MCF 10A (cell line): ENCODE measurements at regions of chr1 and their contacts with region 1.

Region 1: DNA sequence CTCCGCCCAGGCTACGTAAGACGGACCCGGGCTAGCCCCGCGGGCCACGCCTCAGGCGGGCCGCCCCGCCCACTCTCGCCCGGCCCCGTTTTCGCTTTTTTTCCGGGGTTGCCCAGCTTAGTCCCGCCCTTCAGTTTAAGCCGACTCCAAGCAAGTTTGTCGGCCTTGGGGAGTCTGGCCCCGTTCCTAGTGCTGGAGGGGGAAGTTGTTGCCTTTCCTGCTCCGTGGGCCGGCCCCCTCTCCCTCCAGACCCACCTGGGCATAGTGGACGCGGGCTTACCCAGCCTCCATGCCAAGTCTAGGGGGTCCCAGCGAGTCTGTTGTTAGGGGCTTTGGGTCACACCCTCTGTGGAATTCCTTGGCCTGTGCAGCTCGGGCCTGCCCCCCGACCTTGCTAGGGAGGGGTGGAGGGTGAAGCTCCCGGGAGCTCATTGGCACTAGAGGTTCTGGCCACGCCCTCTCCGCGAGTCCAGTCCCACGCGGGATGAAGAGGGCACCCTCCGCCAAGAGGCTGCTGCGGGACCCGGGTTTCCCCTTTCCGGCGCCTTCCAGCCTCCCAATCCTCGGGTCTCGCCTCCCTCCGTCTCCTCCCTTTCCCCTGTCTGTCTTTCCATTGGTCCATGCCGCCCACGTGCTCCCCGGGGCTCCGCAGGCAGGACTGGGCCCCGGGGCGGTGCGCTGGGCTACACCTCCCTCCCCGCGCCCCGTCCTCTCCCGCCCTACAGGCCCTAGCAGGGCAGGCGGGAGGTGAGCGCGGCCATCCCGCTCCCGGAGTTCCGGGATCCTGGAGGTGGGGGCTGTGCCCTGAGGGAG is 3.3 kb downstream of the RUSC1 start:
- DNase-seq: peak; percentile 99
- H3K4me3 Mint-ChIP-seq: peak overlapping the region; percentile 90
- H3K27ac Mint-ChIP-seq: peak overlapping the region; percentile 55
- H3K4me1 Mint-ChIP-seq: peaks cover 30% of the 10 kb centered on the region
- H3K27me3 Mint-ChIP-seq: no peaks in the 10 kb centered on the region
- CTCF ChIP-seq: no peak

Region 2: DNA sequence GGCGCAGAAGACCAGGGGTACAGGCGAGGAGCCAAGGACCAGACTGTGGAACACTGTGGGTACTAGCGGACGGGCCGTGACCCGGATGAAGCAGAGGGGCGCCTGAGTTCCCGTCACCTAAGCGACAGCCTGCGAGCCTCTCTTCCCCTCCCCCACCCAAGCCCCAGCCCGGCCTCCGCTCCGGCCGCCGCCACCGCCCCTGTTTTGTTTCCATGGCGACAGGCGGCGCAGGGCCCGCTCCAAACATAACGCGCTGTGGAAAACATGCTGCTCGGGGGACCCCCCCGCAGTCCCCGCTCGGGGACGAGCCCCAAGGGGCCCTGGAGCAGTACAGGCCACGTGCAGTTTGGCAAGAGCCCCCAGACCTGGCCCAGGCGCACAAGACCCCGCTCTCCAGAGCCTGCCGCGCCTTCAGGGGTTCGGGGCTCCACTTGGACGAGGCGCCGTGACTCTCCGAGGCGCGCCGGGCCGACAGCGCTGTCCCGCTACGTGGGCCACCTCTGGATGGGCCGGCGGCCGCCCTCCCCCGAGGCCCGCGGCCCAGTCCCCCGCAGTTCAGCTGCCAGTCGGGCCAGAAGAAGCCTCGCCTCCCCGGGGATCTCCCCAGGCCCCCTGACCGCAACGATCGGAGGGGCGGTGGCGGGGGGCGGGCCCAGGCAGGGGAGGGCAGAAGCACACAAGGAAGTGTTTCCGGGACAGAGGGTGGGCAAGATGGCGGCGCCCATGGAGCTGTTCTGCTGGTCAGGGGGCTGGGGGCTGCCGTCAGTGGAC is 115.3 kb before region 1 on chr1 and contains the start of gene MTX1:
- CTCF ChIA-PET with region 1: interaction called, 7 read pairs
- POLR2A ChIA-PET with region 1: interaction called, 4 read pairs
- intact Hi-C with region 1: loop called (anchors 2 kb)
- DNase-seq: peak; percentile 79
- H3K4me3 Mint-ChIP-seq: peak within 1 kb of the TSS; percentile 76
- H3K27ac Mint-ChIP-seq: peak within 1 kb of the TSS; percentile 91
- H3K4me1 Mint-ChIP-seq: peaks cover 22% of the 10 kb centered on the region
- H3K27me3 Mint-ChIP-seq: no peaks in the 10 kb centered on the region
- CTCF ChIP-seq: no peak
- total RNA-seq, gene MTX1: 64.6 and 67.4 TPM in 2 replicates

Region 3: GRCh38 chr1:155267373-155267772 is 56.6 kb before region 1 on chr1:
- CTCF ChIA-PET with region 1: interaction called, 10 read pairs
- POLR2A ChIA-PET with region 1: interaction called, 61 read pairs
- intact Hi-C with region 1: no loop called
- DNase-seq: no peak
- H3K4me3 Mint-ChIP-seq: no peak overlapping the region
- H3K27ac Mint-ChIP-seq: no peak overlapping the region
- H3K4me1 Mint-ChIP-seq: peaks cover 8% of the 10 kb centered on the region
- H3K27me3 Mint-ChIP-seq: no peaks in the 10 kb centered on the region
- CTCF ChIP-seq: no peak

Region 4: DNA sequence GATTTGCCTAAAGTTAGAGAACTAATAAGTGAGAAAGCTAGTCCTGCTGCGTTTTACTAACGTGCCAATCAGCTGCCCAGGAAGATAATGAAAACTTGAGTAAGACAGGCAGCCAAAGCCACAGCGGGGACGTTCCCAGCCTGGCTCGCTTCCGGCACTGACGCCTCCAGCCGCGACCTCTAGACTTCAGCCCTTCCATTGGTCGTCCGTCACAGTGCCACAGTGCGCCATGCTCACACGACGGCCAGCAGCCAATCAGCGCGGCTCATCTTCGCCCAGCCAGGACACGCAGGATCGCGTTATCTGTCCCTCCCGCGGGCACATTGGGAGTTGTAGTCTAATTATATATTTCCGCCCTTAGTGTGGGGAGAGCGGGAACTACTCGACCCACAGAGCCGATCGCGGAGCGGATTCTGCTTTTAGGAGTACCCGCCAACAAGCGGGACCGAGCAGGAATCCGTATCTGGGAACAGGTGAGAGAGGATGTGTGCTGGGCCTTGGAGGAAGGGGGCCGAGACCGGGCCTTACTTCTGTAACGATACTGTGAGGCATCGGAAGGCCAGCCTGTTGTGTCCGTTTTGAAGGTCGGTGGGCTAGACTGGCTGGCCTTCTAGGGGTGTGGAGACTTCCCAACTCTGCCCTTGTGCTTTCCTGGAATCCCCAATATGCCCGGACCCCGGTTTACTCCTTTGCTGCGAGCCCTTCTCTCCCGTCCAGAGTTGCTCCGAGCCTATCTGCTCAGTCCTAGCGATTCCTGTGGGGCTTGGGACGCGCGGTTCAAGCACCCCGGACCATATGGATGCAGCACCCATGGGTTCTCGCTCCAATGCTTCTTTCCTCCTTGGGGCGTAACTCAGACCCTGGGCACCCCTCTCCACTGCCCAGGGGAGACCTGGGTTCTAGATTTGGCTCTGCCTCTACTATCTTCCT is 15.2 kb before region 1 on chr1 and contains the start of gene FDPS:
- CTCF ChIA-PET with region 1: interaction called, 24 read pairs
- POLR2A ChIA-PET with region 1: interaction called, 103 read pairs
- intact Hi-C with region 1: loop called (anchors 2 kb)
- DNase-seq: peak; percentile 100
- H3K4me3 Mint-ChIP-seq: peak within 1 kb of the TSS; percentile 100
- H3K27ac Mint-ChIP-seq: peak within 1 kb of the TSS; percentile 97
- H3K4me1 Mint-ChIP-seq: peaks cover 13% of the 10 kb centered on the region
- H3K27me3 Mint-ChIP-seq: no peaks in the 10 kb centered on the region
- CTCF ChIP-seq: no peak
- total RNA-seq, gene FDPS: 176 and 264 TPM in 2 replicates

Region 5: GRCh38 chr1:155562581-155563376 is 238.8 kb after region 1 on chr1 and contains the start of gene ASH1L:
- CTCF ChIA-PET with region 1: no interaction called
- POLR2A ChIA-PET with region 1: interaction called, 25 read pairs
- intact Hi-C with region 1: no loop called
- DNase-seq: peak; percentile 97
- H3K4me3 Mint-ChIP-seq: peak within 1 kb of the TSS; percentile 95
- H3K27ac Mint-ChIP-seq: peak within 1 kb of the TSS; percentile 97
- H3K4me1 Mint-ChIP-seq: peaks cover 19% of the 10 kb centered on the region
- H3K27me3 Mint-ChIP-seq: no peaks in the 10 kb centered on the region
- CTCF ChIP-seq: no peak
- total RNA-seq, gene ASH1L: 59.1 and 66.8 TPM in 2 replicates

Region 6: GRCh38 chr1:155648551-155649147 is 324.6 kb after region 1 on chr1:
- CTCF ChIA-PET with region 1: interaction called, 4 read pairs
- POLR2A ChIA-PET with region 1: interaction called, 14 read pairs
- intact Hi-C with region 1: loop called (anchors 1 kb)
- DNase-seq: peak; percentile 97
- H3K4me3 Mint-ChIP-seq: peak overlapping the region; percentile 73
- H3K27ac Mint-ChIP-seq: peak overlapping the region; percentile 47
- H3K4me1 Mint-ChIP-seq: peaks cover 53% of the 10 kb centered on the region
- H3K27me3 Mint-ChIP-seq: no peaks in the 10 kb centered on the region
- CTCF ChIP-seq: peak; percentile 61